ENCODE measurements at regions of chr11 and their contacts with region 1.

Region 1: DNA sequence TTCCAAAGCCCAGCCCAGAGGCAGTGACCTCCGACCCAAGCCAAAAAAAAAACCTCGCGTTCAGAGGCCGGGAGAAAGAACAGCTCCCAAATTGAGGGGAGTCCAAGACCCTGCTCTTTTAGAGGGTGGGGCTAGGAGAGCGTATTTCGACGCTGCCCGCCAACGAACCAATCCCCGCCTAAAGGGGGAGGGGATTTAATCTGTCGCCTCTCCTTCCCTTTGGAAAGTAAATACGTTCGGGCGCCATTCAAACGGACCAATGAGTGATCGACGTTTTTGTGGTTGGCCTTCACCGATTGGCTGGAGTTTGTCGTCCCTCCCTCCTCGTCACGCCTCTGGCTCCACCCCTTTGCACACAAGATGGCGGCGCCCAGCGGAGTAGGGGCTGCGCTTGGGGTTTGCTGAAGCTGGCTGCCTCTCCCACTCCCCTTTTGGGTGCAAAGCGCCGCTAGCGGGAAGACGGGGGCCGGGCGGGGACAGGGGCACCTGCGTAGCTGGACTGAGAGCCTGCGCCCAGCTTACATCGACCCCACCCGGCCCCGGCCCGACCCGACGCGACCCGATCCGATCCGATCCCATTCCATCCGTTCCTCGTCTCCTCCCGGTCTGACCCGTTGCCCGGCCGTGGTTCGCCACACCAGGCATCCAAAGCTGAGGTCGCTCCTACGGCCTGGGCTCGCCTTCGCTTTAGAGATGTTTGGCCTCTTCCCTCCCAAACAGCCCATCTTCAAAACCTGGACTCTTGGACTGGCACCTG is at the start of gene RNF26:
- DNase-seq: peak; percentile 97
- ATAC-seq: peak; percentile 95
- H3K4me3 Mint-ChIP-seq: peak within 1 kb of the TSS; percentile 98
- H3K27ac Mint-ChIP-seq: peak within 1 kb of the TSS; percentile 99
- H3K4me1 Mint-ChIP-seq: peaks cover 44% of the 10 kb centered on the region
- H3K27me3 Mint-ChIP-seq: peaks cover 9% of the 10 kb centered on the region
- CTCF ChIP-seq: no peak
- total RNA-seq, gene RNF26: 30.2 to 31.9 TPM

Region 2: GRCh38 chr11:119196833-119197483 is 137.4 kb before region 1 on chr11:
- CTCF ChIA-PET with region 1: interaction called, 12 read pairs
- POLR2A ChIA-PET with region 1: no interaction called
- intact Hi-C with region 1: loop called (anchors 10 kb)
- DNase-seq: peak; percentile 83
- ATAC-seq: peak; percentile 96
- H3K4me3 Mint-ChIP-seq: no peak overlapping the region
- H3K27ac Mint-ChIP-seq: no peak overlapping the region
- H3K4me1 Mint-ChIP-seq: peaks cover 2% of the 10 kb centered on the region
- H3K27me3 Mint-ChIP-seq: no peaks in the 10 kb centered on the region
- CTCF ChIP-seq: peak; percentile 80

Region 3: GRCh38 chr11:119306373-119306890 is 27.9 kb before region 1 on chr11:
- CTCF ChIA-PET with region 1: interaction called, 17 read pairs
- POLR2A ChIA-PET with region 1: no interaction called
- intact Hi-C with region 1: no loop called
- DNase-seq: peak; percentile 62
- ATAC-seq: peak; percentile 91
- H3K4me3 Mint-ChIP-seq: peak overlapping the region; percentile 40
- H3K27ac Mint-ChIP-seq: peak overlapping the region; percentile 91
- H3K4me1 Mint-ChIP-seq: peaks cover 25% of the 10 kb centered on the region
- H3K27me3 Mint-ChIP-seq: no peaks in the 10 kb centered on the region
- CTCF ChIP-seq: no peak

Region 4: DNA sequence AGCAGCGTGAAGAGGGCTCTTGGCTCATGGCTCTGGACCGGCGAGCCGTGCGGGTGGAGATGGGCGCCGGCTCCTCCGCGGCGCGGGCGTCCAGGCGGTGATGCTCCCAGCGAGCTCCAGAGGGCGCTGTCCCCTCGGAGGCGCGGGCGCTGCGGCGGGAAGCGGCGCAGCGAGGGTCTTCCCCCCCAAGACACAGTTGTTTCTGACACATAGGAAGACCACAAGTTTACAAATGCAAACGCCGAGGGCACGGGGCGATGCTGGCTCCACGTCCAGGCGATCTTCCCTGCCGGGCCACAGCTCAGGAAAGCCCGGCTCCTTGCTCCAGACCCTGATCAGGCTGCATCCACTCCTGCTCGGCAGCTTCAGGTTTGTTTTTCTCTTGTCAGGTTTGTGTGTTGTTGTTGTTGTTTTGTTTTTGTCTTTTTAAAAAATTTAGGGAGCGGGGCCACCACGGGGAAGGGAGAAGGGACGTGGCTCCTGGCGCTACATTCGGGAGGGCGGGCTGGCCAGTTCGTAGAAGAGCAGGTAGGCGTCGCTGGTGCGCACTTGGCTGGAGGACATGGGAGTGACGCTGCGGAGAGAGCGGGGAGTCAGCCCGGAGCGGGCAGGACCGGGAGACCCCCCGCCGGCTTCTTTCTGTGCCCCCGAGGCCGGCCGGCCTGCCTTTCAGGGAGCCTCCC is 22.1 kb after region 1 on chr11:
- CTCF ChIA-PET with region 1: interaction called, 24 read pairs
- POLR2A ChIA-PET with region 1: no interaction called
- intact Hi-C with region 1: no loop called
- DNase-seq: peak; percentile 80
- ATAC-seq: peak; percentile 90
- H3K4me3 Mint-ChIP-seq: peak overlapping the region; percentile 77
- H3K27ac Mint-ChIP-seq: peak overlapping the region; percentile 41
- H3K4me1 Mint-ChIP-seq: peaks cover 8% of the 10 kb centered on the region
- H3K27me3 Mint-ChIP-seq: peaks cover 21% of the 10 kb centered on the region
- CTCF ChIP-seq: peak; percentile 100

Region 5: GRCh38 chr11:119381181-119381988 is 47.0 kb after region 1 on chr11 and contains the start of gene USP2:
- CTCF ChIA-PET with region 1: interaction called, 17 read pairs
- POLR2A ChIA-PET with region 1: interaction called, 3 read pairs
- intact Hi-C with region 1: no loop called
- DNase-seq: peak; percentile 97
- ATAC-seq: peak; percentile 99
- H3K4me3 Mint-ChIP-seq: no peak within 1 kb of the TSS
- H3K27ac Mint-ChIP-seq: no peak within 1 kb of the TSS
- H3K4me1 Mint-ChIP-seq: peaks cover 7% of the 10 kb centered on the region
- H3K27me3 Mint-ChIP-seq: no peaks in the 10 kb centered on the region
- CTCF ChIP-seq: peak; percentile 88
- total RNA-seq, gene USP2: 0.61 to 0.96 TPM

Region 6: DNA sequence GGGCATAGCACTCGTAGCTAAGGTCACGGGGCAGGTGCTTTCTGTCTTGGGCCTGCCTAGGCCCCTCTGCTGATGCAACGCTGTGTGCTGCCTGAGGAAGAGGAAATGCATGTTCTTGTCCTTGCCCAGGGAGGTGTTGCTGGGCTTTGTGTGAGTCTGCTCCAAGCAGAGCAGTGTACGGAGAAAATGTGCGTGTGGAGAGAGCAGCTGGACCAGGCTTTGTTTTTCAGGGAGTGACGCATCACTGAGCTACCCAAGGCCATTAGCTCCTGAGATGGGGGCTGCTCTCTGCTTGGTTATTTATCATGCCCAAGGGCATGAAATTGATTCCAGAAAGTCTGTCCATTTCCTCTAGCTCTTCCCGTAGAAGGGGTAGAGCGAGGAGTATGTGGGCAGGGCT is 171.5 kb after region 1 on chr11:
- CTCF ChIA-PET with region 1: no interaction called
- POLR2A ChIA-PET with region 1: no interaction called
- intact Hi-C with region 1: no loop called
- DNase-seq: no peak
- ATAC-seq: no peak
- H3K4me3 Mint-ChIP-seq: no peak overlapping the region
- H3K27ac Mint-ChIP-seq: no peak overlapping the region
- H3K4me1 Mint-ChIP-seq: peaks cover 15% of the 10 kb centered on the region
- H3K27me3 Mint-ChIP-seq: peaks cover 9% of the 10 kb centered on the region
- CTCF ChIP-seq: no peak